ENCODE measurements at regions of chr10 and their contacts with region 1.

Region 1: DNA sequence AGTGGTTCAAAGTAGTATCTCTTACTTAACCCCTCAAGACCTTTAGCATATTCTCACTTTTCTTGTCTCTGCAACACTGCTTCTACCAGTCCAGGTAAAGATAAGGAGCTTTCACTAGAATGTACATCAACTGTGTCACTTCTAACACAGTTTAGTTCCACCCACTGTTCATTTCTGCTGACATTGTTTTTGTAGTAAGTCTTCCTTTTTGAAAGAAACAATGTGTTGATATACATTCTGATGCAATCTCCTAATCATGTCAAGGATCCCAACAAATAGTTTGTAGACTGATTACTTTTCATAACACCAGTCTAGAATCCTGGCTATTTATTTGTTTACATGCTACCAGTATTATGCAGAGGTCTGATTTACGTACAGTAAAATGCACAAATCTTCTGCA is 47.5 kb downstream of the CCSER2 start:
- DNase-seq: no peak
- H3K4me3 Mint-ChIP-seq: no peak overlapping the region
- H3K27ac Mint-ChIP-seq: no peak overlapping the region
- H3K4me1 Mint-ChIP-seq: peaks cover 37% of the 10 kb centered on the region
- H3K27me3 Mint-ChIP-seq: no peaks in the 10 kb centered on the region

Region 2: GRCh38 chr10:84348860-84349259 is 27.0 kb before region 1 on chr10:
- CTCF ChIA-PET with region 1: no interaction called
- POLR2A ChIA-PET with region 1: interaction called, 10 read pairs
- DNase-seq: no peak
- H3K4me3 Mint-ChIP-seq: no peak overlapping the region
- H3K27ac Mint-ChIP-seq: no peak overlapping the region
- H3K4me1 Mint-ChIP-seq: peaks cover 54% of the 10 kb centered on the region
- H3K27me3 Mint-ChIP-seq: no peaks in the 10 kb centered on the region